ENCODE measurements at regions of chr7 and their contacts with region 1.

Region 1: DNA sequence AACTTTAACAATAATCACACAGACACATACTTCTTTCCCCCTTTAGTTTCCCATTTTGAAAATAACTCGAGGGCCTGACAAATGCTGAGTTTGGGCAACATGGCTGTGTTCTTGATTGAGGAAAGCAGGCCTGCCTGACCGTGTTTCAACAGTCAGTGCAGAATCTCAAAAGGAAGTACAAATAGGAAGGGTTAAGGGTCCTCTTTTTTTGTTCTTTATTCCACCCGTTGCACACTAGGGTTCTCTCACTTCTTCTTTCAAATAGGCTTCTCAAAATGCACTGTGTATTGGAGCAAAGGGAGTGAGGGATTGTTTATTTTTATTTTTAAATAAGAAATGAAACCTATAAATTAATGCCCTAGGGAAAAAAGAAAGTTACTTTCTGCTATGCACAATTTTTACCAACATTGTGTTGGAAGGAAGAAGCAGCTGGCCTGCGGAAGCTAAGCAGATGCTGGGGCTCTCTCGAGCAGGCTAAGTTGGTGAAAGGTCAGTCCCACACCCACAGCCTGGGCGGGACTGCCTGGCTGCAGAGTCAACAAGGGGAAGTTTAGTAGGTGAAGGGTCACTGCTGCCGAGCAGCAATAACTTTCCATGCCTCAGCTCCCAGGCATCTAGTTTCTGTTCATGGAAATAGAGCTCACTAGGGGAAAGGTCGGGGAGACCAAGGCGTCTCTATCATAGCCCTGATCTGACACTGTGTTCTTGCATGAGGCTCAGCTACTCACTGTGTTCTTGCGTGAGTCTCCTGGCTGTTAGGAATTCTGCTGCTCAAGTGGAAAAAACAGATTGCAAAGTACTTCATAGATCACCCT is 12.2 kb upstream of the PDK4 start:
- DNase-seq: peak; percentile 91 to 97 (median 93)
- ATAC-seq: peak; percentile 97 to 100 (median 98)
- H3K4me3 ChIP-seq: peak overlapping the region in 10 of 12 donors; percentile 19 to 50 (median 30)
- H3K27ac ChIP-seq: peak overlapping the region; percentile 76 to 95 (median 90)
- H3K4me1 ChIP-seq: peaks cover 17 to 76% (median 39%) of the 10 kb centered on the region in 12 donors
- H3K27me3 ChIP-seq: no peaks in the 10 kb centered on the region
- CTCF ChIP-seq: no peak
- POLR2A ChIP-seq: peak in 1 of 2 donors; percentile 38

Region 2: DNA sequence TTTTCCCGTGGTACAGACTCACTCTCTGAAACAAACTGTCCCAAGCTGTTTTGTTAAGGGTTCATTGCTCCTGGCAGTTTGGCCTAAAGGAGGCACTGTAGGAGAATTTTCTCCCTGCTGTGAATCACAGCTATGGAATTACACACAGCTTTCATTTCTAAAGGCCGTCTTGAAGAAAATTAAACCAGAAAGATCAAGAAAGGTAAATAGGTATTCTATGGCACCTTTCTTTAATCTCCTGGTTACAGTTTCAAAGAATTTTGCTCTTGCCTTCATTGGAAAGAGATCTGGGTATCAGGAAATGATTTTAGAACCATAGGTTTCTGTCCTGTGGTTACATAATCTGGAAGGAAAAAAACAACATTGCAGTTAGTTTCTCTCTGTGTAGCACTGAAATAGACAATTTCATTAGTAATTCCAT is 63.5 kb before region 1 on chr7:
- intact Hi-C with region 1: loop called in 2 of 10 experiments (anchors 1 to 2 kb)
- DNase-seq: peak in 4 of 5 donors; percentile 32 to 53 (median 36)
- ATAC-seq: peak; percentile 77 to 89 (median 84)
- H3K4me3 ChIP-seq: peak overlapping the region in 11 of 12 donors; percentile 14 to 57 (median 46)
- H3K27ac ChIP-seq: peak overlapping the region; percentile 63 to 95 (median 80)
- H3K4me1 ChIP-seq: peaks cover 9 to 51% (median 39%) of the 10 kb centered on the region in 12 donors
- H3K27me3 ChIP-seq: no peaks in the 10 kb centered on the region
- CTCF ChIP-seq: peak; percentile 63 to 88 (median 79)
- POLR2A ChIP-seq: no peak

Region 3: GRCh38 chr7:95628831-95629439 is 20.4 kb after region 1 on chr7:
- intact Hi-C with region 1: loop called in 3 of 10 experiments (anchors 1 to 2 kb)
- DNase-seq: peak in 2 of 5 donors; percentile 21 to 35
- ATAC-seq: peak; percentile 86 to 96 (median 92)
- H3K4me3 ChIP-seq: no peak overlapping the region
- H3K27ac ChIP-seq: peak overlapping the region; percentile 10 to 93 (median 78)
- H3K4me1 ChIP-seq: peaks cover 0 to 19% (median 8%) of the 10 kb centered on the region in 12 donors
- H3K27me3 ChIP-seq: no peaks in the 10 kb centered on the region
- CTCF ChIP-seq: peak in 2 of 12 donors; percentile 5 to 31
- POLR2A ChIP-seq: no peak

Region 4: DNA sequence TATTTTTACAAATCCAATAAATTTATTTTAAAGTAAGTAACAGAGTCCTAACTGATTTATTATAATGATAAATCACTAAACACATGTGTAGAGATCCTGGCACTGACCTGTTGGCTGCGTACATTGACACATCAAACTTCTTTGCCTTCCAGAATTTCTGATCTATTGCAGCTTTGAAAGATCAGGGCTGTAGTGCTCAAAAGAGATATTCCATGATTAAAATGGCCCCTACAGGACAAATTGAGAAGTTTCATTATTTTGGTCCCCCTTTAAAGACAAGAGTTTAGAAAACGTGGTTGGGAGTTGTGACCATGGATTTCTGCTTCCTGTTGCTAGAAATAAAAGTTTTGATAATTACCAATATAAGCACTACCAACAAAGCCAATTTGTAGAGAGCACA is 75.5 kb after region 1 on chr7:
- intact Hi-C with region 1: loop called in 3 of 10 experiments (anchors 5 to 10 kb)
- DNase-seq: no peak
- ATAC-seq: peak; percentile 23 to 72 (median 36)
- H3K4me3 ChIP-seq: peak overlapping the region in 1 of 12 donors; percentile 22
- H3K27ac ChIP-seq: peak overlapping the region in 1 of 12 donors; percentile 62
- H3K4me1 ChIP-seq: peaks cover 0 to 12% (median 0%) of the 10 kb centered on the region in 12 donors
- H3K27me3 ChIP-seq: no peaks in the 10 kb centered on the region
- CTCF ChIP-seq: peak; percentile 45 to 77 (median 60)
- POLR2A ChIP-seq: no peak

Region 5: DNA sequence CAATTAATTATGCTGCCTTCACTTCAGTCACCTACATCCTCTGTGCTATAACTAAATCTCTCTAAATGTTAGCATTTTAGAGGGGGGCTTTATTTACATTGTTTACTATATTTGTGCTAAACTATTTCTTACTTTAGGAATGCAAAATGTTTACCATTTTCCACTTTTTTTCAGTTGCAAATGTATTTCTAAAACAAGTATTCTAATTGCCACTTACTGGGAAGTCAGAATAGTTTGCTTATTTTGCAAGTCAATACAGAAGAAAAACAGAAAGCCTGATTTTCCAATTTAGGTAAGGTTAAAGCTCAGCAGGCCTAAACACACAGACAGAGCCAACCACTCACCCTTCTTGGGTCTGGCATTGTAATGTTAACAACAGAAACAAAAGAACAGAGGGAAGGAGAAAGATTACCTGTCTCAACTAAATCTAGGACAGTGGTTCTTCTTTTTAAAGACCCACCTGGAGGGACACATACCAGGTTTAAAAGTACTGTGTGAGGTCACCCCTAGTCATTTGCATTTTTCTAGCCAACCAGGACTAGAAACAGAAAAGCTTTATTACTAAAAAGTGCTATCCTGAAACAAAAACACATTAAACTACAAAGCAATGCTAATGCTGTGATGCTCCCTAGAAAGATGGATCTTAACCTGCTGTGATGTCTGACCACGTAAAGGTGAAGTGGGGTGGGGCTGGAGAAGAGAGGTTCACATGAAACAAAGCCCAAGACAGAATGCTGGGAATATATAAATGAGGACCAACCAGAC is 535.1 kb after region 1 on chr7:
- intact Hi-C with region 1: no loop called
- DNase-seq: no peak
- ATAC-seq: no peak
- H3K4me3 ChIP-seq: no peak overlapping the region
- H3K27ac ChIP-seq: no peak overlapping the region
- H3K4me1 ChIP-seq: no peaks in the 10 kb centered on the region
- H3K27me3 ChIP-seq: no peaks in the 10 kb centered on the region
- CTCF ChIP-seq: no peak
- POLR2A ChIP-seq: no peak

Region 6: DNA sequence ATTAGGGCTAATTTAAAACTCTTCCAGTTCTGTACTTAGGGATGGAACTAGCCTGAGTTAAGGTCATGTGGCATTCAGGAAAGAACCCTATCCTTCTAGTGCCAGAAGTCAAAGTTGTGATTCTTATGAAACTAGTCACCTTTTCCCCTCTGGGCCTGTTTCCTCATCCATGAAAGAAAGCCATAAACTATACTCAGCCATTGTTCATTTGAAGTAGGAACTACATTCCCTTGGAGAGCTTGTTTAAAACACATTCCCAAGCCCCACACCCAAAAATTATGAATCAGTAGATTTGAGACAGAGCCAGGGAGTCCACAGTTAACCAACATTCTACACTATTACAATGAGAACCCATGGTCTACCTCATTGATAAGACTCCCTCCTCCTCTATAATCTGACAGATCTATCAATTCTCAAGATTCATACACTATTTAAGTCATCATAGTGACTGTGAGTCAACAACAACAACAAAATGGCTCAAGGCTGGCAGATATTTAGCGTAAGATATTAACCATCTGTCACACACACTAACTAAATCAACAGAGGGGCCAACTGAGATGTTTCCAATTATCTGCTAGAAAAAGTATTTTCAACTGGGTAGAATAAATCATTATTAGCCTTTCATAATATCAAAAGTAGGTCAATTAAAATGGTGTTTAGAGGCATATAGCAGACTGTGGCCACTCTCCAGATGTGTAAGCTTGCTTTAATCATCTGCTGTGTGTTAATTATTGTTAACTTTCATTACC is 611.0 kb after region 1 on chr7:
- intact Hi-C with region 1: no loop called
- DNase-seq: no peak
- ATAC-seq: peak in 3 of 4 donors; percentile 47 to 91 (median 87)
- H3K4me3 ChIP-seq: no peak overlapping the region
- H3K27ac ChIP-seq: peak overlapping the region in 2 of 12 donors; percentile 29 to 57
- H3K4me1 ChIP-seq: peaks cover 0 to 11% (median 2%) of the 10 kb centered on the region in 12 donors
- H3K27me3 ChIP-seq: no peaks in the 10 kb centered on the region
- CTCF ChIP-seq: no peak
- POLR2A ChIP-seq: no peak